BJ (cell line): ENCODE measurements at regions of chr11 and their contacts with region 1.

Region 1: DNA sequence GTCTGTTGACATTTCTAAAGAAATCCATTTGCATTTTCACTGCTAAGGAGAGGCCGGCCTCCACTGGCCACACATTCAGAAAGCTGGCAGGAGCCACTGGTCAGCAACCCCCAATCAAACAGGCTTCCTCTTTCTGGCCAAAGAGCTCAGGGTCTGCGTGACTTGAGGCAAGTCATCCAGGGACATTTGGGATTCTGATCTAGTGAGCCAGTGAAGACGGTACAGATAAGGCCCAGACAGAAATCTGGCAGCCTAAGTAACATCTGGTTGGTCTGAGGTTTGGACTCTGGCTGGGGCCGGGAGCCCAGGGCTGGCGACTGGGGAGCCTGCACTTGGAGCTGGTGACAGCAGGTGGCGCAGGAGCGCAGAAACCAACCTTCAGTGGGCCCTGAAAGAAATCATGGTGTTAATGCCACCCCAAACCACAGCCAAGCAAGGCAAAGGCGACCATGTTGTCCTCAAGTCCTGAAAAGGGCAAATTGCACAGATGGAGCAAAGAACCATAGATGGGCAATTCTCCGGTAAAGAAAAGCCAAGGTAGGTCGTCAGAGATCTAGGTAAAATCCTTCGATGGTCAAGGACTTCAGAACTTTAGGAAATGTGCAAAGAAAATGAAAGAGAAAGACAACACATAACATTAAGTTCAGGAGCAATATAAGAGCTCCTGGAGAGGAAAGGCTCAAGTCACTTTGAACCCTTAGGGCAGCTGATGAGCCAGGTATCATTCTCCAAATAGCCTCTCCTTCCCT is 99.4 kb upstream of the BLID start:
- DNase-seq: peak; percentile 93
- H3K4me3 ChIP-seq: no peak overlapping the region
- H3K27me3 ChIP-seq: no peaks in the 10 kb centered on the region
- CTCF ChIP-seq: peak; percentile 96

Region 2: DNA sequence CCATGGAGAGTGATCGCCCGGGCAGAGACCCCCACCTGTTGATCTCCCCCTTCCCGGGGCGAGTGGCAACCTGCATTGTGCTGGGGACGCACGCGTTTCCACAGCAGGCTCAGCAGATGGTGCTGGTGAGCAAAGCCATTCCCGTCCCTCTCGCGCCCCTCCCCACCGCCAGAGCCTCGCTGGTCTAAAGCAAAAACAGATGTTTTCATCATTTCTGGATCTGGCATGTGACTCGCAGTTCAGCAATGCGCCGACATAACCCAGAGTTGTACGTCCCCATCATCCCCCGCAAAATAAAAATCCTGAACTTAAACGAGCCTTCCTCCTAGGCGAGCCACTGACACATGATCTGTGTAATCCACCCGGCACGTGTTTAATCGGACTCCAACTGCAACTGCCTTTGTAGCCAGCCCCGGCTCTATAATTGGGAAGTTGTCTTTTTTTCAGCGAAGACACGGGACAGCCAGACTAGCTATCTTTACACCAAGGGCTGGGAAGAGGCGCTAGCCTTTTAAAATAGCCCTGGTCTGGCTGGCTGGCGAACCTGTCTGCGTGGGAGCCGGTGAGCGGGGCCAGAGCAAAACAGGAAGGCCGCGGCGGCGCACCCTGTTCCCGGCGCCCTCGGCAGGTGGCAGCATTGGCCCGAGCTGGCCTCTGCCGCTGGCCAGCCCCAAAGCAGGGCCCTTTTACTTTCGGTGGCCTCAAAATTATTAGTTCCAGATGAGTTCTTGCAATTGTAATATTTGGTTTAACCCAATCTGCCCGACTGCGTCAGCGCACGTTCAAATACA is 559.7 kb before region 1 on chr11:
- CTCF ChIA-PET with region 1: interaction called, 13 read pairs
- POLR2A ChIA-PET with region 1: interaction called, 3 read pairs
- DNase-seq: peak; percentile 91
- H3K4me3 ChIP-seq: peak overlapping the region; percentile 45
- H3K27me3 ChIP-seq: no peaks in the 10 kb centered on the region
- CTCF ChIP-seq: peak; percentile 97

Region 3: DNA sequence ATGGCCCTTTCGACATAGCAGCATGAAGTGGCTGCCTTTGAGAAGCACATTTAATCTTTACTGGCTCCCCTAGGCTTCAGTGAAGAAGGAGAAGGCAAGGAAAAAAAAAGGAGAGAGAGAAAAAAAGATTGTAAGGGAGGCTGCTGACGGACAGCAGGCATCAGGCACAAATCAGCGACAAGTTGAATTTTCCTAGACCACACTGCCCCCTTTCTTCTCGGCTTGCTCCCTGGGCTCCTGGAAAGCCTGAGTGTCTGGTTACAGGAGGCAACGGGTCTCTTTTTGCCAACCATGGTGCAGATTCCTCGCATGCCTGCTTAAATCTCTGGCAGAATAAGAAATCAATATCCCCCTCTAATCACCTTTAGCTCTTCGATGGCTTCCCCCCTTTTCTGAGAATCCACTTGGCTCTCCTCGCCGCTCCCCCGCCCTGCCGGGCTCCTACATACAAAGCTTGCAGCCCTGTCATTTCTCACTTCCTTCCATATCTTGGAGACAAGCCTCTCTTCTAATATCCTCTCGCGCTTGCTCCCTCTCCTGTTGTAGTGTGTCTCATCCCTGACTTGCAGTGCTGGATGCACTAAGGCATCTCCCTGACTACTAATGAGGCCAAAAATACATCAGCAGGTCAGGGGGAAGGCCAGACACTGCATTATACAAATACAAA is 113.7 kb before region 1 on chr11:
- CTCF ChIA-PET with region 1: interaction called, 19 read pairs
- POLR2A ChIA-PET with region 1: interaction called, 10 read pairs
- DNase-seq: peak; percentile 55
- H3K4me3 ChIP-seq: peak overlapping the region; percentile 68
- H3K27me3 ChIP-seq: no peaks in the 10 kb centered on the region
- CTCF ChIP-seq: peak; percentile 69

Region 4: DNA sequence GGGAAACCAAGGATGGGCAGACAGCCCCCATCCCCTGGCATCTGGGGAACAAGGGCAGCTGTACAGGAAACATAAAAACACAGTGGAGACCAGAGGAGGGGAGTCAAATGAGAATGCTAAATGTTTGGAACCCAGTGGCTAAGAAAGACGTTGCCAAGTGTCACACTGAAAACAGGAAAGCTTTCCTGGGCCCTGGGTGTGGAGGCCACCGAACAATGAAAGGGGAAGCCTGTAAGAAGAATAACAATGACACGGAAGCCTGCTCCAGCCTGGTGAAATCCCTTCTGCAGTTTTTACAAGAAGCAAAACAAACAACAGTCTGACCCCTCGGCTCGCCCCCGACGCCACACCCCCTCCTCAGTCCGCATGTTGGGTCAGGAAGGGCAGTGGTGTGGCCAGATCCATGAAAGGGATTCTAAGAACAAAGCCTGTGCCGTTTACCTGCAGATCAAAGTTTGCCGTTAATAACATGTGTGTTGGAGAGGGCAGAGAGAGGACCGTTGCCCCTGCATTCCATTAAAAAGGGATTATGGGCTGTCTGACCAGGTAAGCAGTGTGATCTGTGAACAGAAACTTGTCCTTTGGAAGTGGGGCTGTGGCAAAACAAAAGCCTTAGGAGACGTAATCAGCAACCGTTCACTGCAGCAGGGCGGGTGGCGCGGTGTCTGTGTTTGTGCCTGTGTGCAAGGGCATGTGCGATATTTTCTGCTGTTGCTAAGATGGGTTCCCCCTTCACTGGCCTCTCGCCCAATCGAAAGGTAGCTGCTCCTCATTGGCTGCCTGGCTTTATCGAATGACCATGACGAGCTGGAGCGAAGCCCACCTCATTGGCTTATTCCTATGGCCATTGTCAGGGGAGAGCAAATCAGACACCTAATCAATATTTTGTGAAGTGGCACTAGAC is 14.3 kb after region 1 on chr11:
- CTCF ChIA-PET with region 1: interaction called, 56 read pairs
- POLR2A ChIA-PET with region 1: no interaction called
- DNase-seq: no peak
- H3K4me3 ChIP-seq: no peak overlapping the region
- H3K27me3 ChIP-seq: no peaks in the 10 kb centered on the region
- CTCF ChIP-seq: no peak

Region 5: DNA sequence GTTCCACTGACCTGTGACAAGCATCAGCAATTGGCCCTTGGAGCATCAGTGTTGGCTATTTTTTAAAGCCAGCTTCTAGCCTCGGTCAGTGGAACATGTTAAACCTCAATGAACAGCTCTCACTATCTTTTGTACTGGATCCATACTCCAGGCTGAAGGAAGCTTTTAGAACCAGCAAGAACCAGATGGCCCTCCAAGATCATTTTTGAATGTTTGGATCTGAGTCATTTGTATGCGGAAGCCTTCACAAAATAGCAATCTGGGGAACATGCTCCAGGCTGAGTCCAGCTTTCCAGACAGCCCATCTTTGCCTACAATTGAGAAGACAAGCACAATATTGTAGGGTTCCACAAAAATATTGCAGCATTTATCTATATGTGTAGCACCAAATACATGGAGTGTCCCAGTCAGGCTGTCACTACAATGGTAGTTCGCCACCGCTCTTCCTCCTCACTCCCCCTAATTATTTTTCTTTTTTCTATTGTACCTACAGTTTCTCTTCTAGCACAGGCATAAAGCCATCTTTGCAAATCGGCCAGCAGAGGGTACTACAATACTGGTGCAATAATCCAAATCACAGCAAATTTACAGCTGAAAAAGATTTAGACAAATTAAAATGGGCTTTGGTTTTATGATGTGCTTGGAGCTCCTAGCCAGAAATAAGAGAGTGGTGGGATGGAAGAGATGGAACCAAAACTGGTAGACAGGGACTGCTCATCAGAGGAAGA is 78.0 kb after region 1 on chr11:
- CTCF ChIA-PET with region 1: interaction called, 12 read pairs
- POLR2A ChIA-PET with region 1: no interaction called
- DNase-seq: no peak
- H3K4me3 ChIP-seq: no peak overlapping the region
- H3K27me3 ChIP-seq: peaks cover 1% of the 10 kb centered on the region; the same call in 1 of the 2 replicates
- CTCF ChIP-seq: peak; percentile 52

Region 6: DNA sequence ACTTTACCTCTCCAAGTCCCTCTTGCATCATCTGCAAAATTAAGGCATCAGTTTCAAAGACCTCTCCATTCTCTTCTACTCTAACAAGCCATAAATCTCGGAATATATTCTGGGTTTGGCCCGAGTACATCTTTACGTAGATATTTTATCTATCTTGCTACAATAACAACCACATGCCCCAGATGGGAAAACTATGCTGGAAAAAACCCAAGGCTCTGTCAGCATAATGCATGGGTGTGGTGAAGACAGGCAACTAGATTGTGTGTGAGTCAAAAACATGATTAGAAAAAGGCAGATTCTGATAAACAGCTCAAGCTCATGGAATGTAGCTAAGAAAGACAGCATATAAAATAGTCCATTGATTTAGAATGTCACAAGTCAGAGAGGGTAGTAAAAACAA is 128.9 kb after region 1 on chr11:
- CTCF ChIA-PET with region 1: interaction called, 16 read pairs
- POLR2A ChIA-PET with region 1: no interaction called
- DNase-seq: peak; percentile 89
- H3K4me3 ChIP-seq: no peak overlapping the region
- H3K27me3 ChIP-seq: no peaks in the 10 kb centered on the region
- CTCF ChIP-seq: no peak

Region 7: DNA sequence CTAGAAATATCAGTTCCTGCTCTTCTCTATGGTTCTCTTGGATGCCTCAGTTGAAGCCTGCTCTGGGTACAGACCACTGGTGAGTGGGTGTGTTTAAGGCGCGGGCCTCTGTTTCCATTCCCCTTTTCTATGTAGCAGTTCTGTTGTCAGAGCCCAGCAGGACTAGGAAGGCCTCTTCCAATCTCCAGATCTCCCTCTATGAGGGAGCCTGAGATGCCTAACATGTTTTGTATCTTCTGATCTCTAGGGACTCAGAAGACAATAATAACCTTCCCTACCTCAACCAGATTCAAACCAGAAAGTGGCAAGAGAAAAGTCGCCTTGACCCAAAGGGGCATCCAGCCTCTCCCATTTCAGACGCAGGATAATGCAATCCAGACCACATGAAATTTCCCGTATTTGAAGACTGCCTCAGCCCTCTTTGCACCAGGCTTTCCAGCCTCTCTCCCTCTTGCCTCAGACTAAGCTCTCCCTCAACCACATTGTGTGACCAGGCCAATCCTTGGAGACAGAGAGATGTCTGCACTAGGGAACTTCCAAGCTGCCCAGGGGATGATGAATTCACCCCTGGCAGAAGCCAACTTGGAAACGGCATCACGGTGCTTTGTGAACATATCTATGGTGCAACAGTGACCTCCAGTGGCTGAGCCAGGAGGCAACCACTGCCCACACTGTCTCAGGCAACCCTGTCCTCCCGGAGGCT is 290.0 kb after region 1 on chr11:
- CTCF ChIA-PET with region 1: interaction called, 36 read pairs
- POLR2A ChIA-PET with region 1: interaction called, 3 read pairs
- DNase-seq: peak; percentile 82
- H3K4me3 ChIP-seq: no peak overlapping the region
- H3K27me3 ChIP-seq: no peaks in the 10 kb centered on the region
- CTCF ChIP-seq: peak; percentile 90